Activated T-helper 2 cell treated with anti-CD3 and anti-CD28 coated beads, Interferon-gamma antibody, Interleukin-2, Interleukin-4, amounts not matched to agents 10 μg/mL and 5 μg/mL and 100 μg/mL, durations not matched to agents 14 hours and 24 hours and 36 hours (primary cell): ENCODE measurements at regions of chr5 and their contacts with region 1.

Region 1: GRCh38 chr5:923281-923873 is 30.7 kb downstream of the TRIP13 start:
- DNase-seq: peak; percentile 69
- H3K4me3 Mint-ChIP-seq: no peak overlapping the region
- H3K27ac Mint-ChIP-seq: peak overlapping the region; percentile 4
- H3K4me1 Mint-ChIP-seq: peaks cover 21% of the 10 kb centered on the region
- H3K27me3 Mint-ChIP-seq: peaks cover 21% of the 10 kb centered on the region

Region 2: GRCh38 chr5:892394-893136 is 30.8 kb before region 1 on chr5 and contains the starts of genes BRD9 and TRIP13:
- intact Hi-C with region 1: no loop called
- DNase-seq: peak; percentile 84
- H3K4me3 Mint-ChIP-seq: peak within 1 kb of the TSS; percentile 86
- H3K27ac Mint-ChIP-seq: peak within 1 kb of the TSS; percentile 86
- H3K4me1 Mint-ChIP-seq: peaks cover 32% of the 10 kb centered on the region
- H3K27me3 Mint-ChIP-seq: no peaks in the 10 kb centered on the region
- total RNA-seq, gene BRD9: 72.9 and 73.2 TPM in 2 replicates
- total RNA-seq, gene TRIP13: 36.6 and 37.6 TPM in 2 replicates

Region 3: GRCh38 chr5:956941-957747 is 33.8 kb after region 1 on chr5:
- intact Hi-C with region 1: loop called (anchors 1 kb)
- DNase-seq: peak; percentile 60
- H3K4me3 Mint-ChIP-seq: no peak overlapping the region
- H3K27ac Mint-ChIP-seq: peak overlapping the region; percentile 58
- H3K4me1 Mint-ChIP-seq: peaks cover 43% of the 10 kb centered on the region
- H3K27me3 Mint-ChIP-seq: peaks cover 4% of the 10 kb centered on the region

Region 4: DNA sequence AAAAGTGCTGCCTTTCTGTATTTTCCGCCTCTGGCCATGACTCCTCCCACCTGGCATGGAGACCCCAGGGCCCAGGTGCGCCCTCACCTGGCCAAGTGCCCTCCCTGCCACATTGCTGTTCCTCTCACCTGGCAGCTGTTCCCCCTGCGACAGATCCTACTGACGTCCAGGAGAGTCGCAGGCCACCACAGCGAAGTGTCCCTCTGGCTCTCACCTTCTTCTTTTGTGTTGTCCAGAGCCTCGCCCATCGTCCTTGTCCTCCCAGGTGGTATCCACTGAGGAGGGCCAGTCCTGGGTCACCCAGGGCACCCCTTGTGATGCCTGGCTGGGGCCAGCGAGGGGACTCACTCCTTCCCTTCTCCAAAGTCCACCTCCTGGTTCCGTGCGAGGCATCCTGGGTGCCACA is 87.9 kb after region 1 on chr5:
- intact Hi-C with region 1: loop called (anchors 1 kb)
- DNase-seq: peak; percentile 49
- H3K4me3 Mint-ChIP-seq: peak overlapping the region; percentile 53
- H3K27ac Mint-ChIP-seq: no peak overlapping the region
- H3K4me1 Mint-ChIP-seq: peaks cover 24% of the 10 kb centered on the region
- H3K27me3 Mint-ChIP-seq: peaks cover 10% of the 10 kb centered on the region

Region 5: GRCh38 chr5:1140171-1140817 is 216.9 kb after region 1 on chr5:
- intact Hi-C with region 1: loop called (anchors 1 kb)
- DNase-seq: peak; percentile 75
- H3K4me3 Mint-ChIP-seq: no peak overlapping the region
- H3K27ac Mint-ChIP-seq: no peak overlapping the region
- H3K4me1 Mint-ChIP-seq: peaks cover 7% of the 10 kb centered on the region
- H3K27me3 Mint-ChIP-seq: peaks cover 2% of the 10 kb centered on the region